ENCODE measurements at regions of chr6 and their contacts with region 1.

Region 1: DNA sequence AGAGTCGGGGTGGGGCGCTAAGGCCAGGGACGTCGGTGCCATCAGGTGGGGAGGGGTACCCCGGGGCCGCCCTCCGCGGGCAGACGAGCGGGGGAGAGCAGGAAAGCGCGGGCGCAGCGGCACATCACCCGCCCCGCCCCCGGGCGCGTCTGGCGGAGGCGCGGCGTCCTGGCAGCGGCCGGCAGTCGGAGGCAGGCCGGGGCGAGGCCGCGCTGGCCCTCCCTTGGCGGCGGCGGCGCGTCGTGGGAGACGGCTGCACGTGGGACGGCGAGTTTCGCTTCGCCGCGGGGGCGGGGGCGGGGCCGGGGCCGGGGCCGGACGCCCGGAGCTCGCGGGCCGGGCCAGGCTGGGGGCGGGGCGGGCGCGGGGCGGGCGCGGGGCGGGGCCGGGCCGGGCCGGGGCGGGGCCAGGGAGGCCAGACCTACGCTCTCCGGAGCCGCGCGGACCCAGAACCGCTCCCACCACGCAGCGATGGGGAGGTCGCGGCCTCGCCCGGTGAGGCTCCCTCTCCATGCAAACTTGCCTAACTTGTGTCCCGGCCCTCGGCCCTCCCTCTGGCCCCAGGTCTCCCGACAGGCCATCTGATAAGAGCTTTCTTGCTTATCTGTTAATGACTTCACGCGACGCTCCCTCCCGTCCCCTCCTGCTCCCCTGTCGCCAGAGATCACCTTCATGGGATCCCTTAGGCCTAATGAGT is 12.5 kb downstream of the ITPR3 start:
- DNase-seq: peak in 1 of 2 experiments; percentile 80
- H3K4me3 ChIP-seq: peak overlapping the region; percentile 35 to 70 (median 66)
- H3K27ac ChIP-seq: no peak overlapping the region
- H3K4me1 ChIP-seq: peaks cover 8 to 31% (median 13%) of the 10 kb centered on the region in 4 experiments
- H3K27me3 ChIP-seq: no peaks in the 10 kb centered on the region; a peak in 2 of 7 replicates
- CTCF ChIP-seq: no peak
- EP300 ChIP-seq: no peak
- POLR2A ChIP-seq: no peak
- RAD21 ChIP-seq: no peak

Region 2: GRCh38 chr6:33592411-33593054 is 41.1 kb before region 1 on chr6:
- CTCF ChIA-PET with region 1: interaction called, 94 read pairs
- POLR2A ChIA-PET with region 1: interaction called, 7 read pairs
- DNase-seq: peak in 1 of 2 experiments; percentile 87
- H3K4me3 ChIP-seq: peak overlapping the region in 2 of 4 experiments; percentile 26 to 53; a peak in 4 of 8 replicates
- H3K27ac ChIP-seq: no peak overlapping the region
- H3K4me1 ChIP-seq: peaks cover 5 to 28% (median 17%) of the 10 kb centered on the region in 4 experiments
- H3K27me3 ChIP-seq: no peaks in the 10 kb centered on the region
- CTCF ChIP-seq: no peak
- EP300 ChIP-seq: no peak
- POLR2A ChIP-seq: no peak
- RAD21 ChIP-seq: no peak

Region 3: GRCh38 chr6:33607784-33608161 is 25.8 kb before region 1 on chr6:
- CTCF ChIA-PET with region 1: interaction called, 39 read pairs
- POLR2A ChIA-PET with region 1: interaction called, 5 read pairs
- DNase-seq: no peak
- H3K4me3 ChIP-seq: no peak overlapping the region
- H3K27ac ChIP-seq: no peak overlapping the region
- H3K4me1 ChIP-seq: peaks cover 6 to 42% (median 26%) of the 10 kb centered on the region in 4 experiments
- H3K27me3 ChIP-seq: no peaks in the 10 kb centered on the region
- CTCF ChIP-seq: peak; percentile 38 to 63 (median 61); a peak in 3 of 4 replicates
- EP300 ChIP-seq: no peak
- POLR2A ChIP-seq: no peak
- RAD21 ChIP-seq: peak; percentile 60 to 63

Region 4: DNA sequence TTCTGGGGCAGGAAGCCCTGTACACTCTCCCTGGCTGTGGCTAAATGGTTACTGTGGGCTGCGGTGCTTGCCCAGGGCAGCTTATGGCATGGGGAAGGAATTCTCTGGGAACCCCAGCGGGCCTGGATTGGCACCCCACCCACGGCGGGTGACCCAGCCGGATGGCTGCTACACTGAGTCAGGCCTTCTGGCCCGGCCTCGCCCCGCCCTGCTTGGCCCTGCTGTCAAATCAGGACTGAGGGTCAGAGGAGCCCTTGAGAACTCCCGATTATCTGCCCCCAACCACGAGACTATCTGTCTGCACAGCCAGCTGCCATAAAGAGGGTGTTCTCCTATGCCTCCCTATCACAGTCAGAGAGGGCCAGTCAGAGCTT is 19.8 kb before region 1 on chr6:
- CTCF ChIA-PET with region 1: interaction called, 59 read pairs
- POLR2A ChIA-PET with region 1: no interaction called
- DNase-seq: no peak
- H3K4me3 ChIP-seq: no peak overlapping the region
- H3K27ac ChIP-seq: no peak overlapping the region
- H3K4me1 ChIP-seq: peaks cover 6 to 25% (median 19%) of the 10 kb centered on the region in 4 experiments
- H3K27me3 ChIP-seq: 0 out of 7 replicates have a peak, but pooled peaks cover 0 to 2% (median 0%) of the 10 kb centered on the region in 4 experiments
- CTCF ChIP-seq: no peak
- EP300 ChIP-seq: no peak
- POLR2A ChIP-seq: no peak
- RAD21 ChIP-seq: no peak

Region 5: DNA sequence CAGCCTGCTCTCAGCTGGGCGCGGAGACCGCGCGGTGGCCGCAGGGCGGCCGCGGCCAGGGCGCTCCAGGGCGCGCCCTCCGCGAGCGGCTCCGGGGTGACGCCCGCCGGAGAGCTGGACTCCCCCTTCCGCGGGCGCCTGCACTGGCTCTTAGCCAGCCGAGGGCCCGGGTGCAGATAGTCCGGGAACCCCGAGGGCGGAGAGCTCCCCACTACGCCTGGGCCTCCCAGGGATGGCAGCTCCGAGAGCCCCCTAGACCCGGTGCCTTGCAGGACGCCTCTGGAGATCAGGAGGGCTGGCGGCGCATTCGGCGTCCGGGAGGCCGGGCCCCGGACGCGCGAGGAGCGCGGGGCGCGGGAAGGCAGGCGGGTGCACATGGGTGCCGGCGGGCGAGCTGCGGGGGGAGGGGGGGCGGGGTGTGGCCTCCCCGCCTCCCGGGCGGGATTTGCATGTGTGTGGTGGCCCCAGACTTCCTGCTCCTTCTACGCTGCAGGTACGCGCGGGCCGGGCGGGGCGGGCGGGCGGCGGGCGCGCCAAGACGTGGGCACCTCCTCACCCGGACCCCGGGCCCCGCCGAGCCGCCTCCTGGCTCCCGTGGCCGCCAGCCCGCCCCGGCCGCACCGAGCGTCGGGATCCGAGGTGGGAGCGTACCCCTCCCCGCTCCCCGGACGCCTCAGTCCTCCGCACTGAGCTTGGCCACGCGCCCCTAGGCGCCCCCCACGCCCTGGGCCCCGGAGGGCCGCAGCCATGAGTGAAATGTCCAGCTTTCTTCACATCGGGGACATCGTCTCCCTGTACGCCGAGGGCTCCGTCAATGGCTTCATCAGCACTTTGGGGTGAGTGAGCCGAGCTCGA is 12.5 kb before region 1 on chr6 and contains the start of gene ITPR3:
- CTCF ChIA-PET with region 1: interaction called, 59 read pairs
- POLR2A ChIA-PET with region 1: interaction called, 28 read pairs
- DNase-seq: peak in 1 of 2 experiments; percentile 79
- H3K4me3 ChIP-seq: peak within 1 kb of the TSS; percentile 70 to 85 (median 80)
- H3K27ac ChIP-seq: no peak within 1 kb of the TSS
- H3K4me1 ChIP-seq: peaks cover 6 to 15% (median 11%) of the 10 kb centered on the region in 4 experiments
- H3K27me3 ChIP-seq: peaks cover 0 to 3% (median 1%) of the 10 kb centered on the region in 4 experiments; a peak in 3 of 7 replicates
- CTCF ChIP-seq: no peak
- EP300 ChIP-seq: no peak
- POLR2A ChIP-seq: no peak
- RAD21 ChIP-seq: no peak
- total RNA-seq, gene ITPR3: 44.9 and 45.7 TPM in 2 replicates

Region 6: DNA sequence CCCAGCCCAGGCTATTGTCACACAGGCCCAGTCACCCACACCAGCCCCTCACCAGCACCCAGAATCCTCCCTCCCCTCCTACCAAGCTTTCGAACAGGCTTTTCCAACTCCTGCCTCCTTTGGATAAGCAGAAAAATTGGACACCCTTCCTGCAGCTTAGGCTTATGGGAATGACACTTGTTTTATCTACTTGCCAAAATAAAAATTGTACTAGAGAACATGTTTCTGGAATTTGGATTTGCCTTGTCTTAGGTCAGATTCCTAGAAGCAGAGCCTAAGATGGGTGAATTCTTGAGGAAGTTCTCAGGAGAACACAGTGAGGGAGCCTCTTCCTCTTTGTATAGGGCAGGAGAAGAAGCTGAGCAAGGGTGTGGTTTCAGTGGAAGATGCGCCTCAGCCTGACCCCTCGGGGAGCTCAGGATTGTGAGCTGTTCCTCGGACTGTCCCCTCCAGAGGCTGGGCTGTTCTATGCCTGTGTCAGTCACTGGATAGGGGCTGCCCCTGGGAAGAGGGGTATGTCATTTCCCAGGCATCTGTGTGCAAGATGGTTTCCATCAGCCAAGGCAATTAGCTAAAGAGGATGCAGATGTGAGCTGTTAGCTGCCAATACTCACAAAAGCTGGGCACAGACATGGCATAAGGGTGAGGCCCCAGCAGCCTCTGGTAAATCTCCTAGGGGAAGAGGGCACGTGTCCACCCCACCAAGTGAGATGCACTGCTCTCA is 21.4 kb after region 1 on chr6:
- CTCF ChIA-PET with region 1: interaction called, 22 read pairs
- POLR2A ChIA-PET with region 1: interaction called, 8 read pairs
- DNase-seq: no peak
- H3K4me3 ChIP-seq: no peak overlapping the region
- H3K27ac ChIP-seq: no peak overlapping the region
- H3K4me1 ChIP-seq: peaks cover 0 to 16% (median 7%) of the 10 kb centered on the region in 4 experiments; a peak in 4 of 7 replicates
- H3K27me3 ChIP-seq: no peaks in the 10 kb centered on the region
- CTCF ChIP-seq: no peak
- EP300 ChIP-seq: no peak
- POLR2A ChIP-seq: no peak
- RAD21 ChIP-seq: no peak

Region 7: DNA sequence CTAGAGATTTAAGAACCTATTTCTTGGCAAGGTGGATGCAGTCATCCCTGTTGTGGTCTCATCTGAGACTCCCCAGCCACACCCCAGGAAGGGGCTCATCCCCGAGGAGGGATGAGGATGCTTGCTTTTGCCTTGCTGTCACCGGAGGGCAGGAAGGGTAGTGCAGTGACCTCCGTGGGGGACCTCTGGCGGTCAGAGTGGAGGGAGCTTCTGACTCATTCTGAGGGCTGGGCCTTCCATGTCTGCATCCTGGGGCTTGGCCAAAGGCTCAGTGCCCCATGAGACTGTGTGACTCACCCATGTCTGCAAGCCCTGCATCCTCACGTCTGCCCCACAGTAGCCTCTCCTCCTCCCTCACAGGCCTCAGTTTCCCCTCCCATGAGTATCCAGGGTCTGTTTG is 39.2 kb after region 1 on chr6:
- CTCF ChIA-PET with region 1: interaction called, 23 read pairs
- POLR2A ChIA-PET with region 1: interaction called, 3 read pairs
- DNase-seq: no peak
- H3K4me3 ChIP-seq: no peak overlapping the region
- H3K27ac ChIP-seq: no peak overlapping the region
- H3K4me1 ChIP-seq: peaks cover 0 to 3% (median 1%) of the 10 kb centered on the region in 4 experiments; a peak in 1 of 7 replicates
- H3K27me3 ChIP-seq: no peaks in the 10 kb centered on the region
- CTCF ChIP-seq: peak in 2 of 3 experiments; percentile 45 to 73; a peak in 3 of 4 replicates
- EP300 ChIP-seq: no peak
- POLR2A ChIP-seq: no peak
- RAD21 ChIP-seq: peak; percentile 48 to 56